Testis (tissue), 5 donors: ENCODE measurements at regions of chr9 and their contacts with region 1.

Region 1: DNA sequence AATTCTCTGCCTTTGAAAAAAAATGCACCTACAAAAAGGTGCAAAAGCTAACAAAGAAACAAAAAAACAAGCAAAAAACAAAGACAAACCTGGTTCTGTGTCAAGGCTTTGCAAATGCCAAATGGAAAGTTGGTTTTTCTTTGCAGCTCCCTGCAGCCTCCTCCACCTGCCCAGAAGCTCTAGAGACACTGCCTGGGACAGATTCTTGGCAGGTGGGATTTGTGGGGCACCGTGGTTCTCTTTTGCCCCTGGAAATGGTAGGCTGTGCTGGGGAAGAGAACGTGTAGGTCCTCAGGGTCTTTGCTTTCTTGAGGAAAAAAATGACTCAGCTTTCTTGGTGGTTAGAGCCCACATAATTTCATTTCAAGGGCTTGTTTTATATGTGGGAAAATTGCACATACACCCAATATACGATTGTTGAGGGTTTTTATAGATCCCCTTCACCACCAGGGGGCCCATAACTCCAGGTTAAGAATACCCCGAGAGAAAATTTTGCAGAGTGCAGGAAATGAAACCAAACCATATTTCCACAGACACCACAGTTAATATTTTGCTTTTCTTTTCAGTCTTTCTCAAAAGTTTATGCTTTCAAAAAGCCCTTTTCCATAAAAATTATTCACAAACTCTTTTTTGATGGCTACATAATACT is 58.7 kb downstream of the NXNL2 start:
- DNase-seq: peak; percentile 79
- H3K4me3 ChIP-seq: no peak overlapping the region
- H3K27ac ChIP-seq: no peak overlapping the region
- H3K4me1 ChIP-seq: no peaks in the 10 kb centered on the region
- H3K27me3 ChIP-seq: no peaks in the 10 kb centered on the region
- CTCF ChIP-seq: peak; percentile 77 to 92 (median 79)
- POLR2A ChIP-seq: no peak

Region 2: GRCh38 chr9:88766778-88767503 is 173.3 kb after region 1 on chr9:
- intact Hi-C with region 1: no loop called
- DNase-seq: no peak
- H3K4me3 ChIP-seq: no peak overlapping the region
- H3K27ac ChIP-seq: no peak overlapping the region
- H3K4me1 ChIP-seq: no peaks in the 10 kb centered on the region
- H3K27me3 ChIP-seq: no peaks in the 10 kb centered on the region
- CTCF ChIP-seq: no peak
- POLR2A ChIP-seq: no peak

Region 3: DNA sequence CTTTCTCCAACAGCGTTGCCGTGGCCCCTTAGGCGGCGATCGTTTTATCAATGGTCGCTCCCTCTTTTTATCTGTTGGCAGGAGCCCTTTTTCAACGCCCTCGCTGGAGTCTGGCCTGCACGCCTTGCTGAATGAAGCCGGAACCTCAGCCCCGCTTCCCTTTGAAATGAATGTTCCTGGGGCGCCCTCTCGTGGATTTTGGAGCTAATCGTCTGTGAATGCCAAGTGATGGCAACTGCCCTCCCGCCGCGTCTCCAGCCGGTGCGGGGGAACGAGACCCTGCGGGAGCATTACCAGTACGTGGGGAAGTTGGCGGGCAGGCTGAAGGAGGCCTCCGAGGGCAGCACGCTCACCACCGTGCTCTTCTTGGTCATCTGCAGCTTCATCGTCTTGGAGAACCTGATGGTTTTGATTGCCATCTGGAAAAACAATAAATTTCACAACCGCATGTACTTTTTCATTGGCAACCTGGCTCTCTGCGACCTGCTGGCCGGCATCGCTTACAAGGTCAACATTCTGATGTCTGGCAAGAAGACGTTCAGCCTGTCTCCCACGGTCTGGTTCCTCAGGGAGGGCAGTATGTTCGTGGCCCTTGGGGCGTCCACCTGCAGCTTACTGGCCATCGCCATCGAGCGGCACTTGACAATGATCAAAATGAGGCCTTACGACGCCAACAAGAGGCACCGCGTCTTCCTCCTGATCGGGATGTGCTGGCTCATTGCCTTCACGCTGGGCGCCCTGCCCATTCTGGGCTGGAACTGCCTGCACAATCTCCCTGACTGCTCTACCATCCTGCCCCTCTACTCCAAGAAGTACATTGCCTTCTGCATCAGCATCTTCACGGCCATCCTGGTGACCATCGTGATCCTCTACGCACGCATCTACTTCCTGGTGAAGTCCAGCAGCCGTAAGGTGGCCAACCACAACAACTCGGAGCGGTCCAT is 407.6 kb after region 1 on chr9:
- intact Hi-C with region 1: loop called (anchors 5 kb)
- DNase-seq: peak; percentile 95
- H3K4me3 ChIP-seq: no peak overlapping the region
- H3K27ac ChIP-seq: no peak overlapping the region
- H3K4me1 ChIP-seq: peaks cover 22% of the 10 kb centered on the region
- H3K27me3 ChIP-seq: no peaks in the 10 kb centered on the region
- CTCF ChIP-seq: peak; percentile 71 to 83 (median 78)
- POLR2A ChIP-seq: no peak

Region 4: DNA sequence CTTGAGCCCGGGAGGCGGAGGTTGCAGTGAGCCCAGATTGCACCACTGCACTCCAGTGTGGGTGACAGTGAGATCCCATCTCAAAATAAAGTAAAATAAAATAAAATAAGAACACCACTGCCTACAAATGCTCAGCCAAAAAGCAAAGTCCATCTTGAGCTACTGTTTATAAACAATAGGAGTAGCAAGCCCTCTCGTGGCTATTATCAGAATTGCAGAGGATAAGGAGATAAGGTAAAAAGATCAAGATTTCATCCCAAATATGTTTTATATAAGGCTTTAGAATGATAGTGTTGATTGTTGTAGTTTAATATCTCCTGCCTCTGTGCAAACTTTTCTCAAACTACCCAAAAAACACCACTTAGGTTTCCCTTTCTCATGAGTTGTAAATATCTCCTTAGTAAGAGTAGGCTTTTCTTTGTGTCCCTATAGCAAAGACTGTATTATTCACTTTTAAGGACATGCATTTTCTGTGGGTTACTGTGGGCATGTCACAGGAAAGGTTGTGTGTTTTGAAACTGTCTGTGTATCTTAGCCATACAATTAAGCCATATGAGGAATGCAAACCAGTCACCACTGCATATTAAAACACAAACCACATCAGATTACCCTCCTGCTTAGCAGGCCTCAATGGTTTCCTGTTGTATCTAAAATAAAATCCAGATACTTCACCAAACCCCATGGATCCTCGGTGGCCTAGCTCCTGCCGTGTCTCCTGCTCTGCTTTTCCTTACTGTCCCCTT is 685.5 kb after region 1 on chr9:
- intact Hi-C with region 1: loop called (anchors 10 kb)
- DNase-seq: no peak
- H3K4me3 ChIP-seq: no peak overlapping the region
- H3K27ac ChIP-seq: no peak overlapping the region
- H3K4me1 ChIP-seq: no peaks in the 10 kb centered on the region
- H3K27me3 ChIP-seq: no peaks in the 10 kb centered on the region
- CTCF ChIP-seq: peak; percentile 37 to 72 (median 47)
- POLR2A ChIP-seq: no peak